Mammary epithelial cell (primary cell): ENCODE measurements at regions of chr6 and their contacts with region 1.

Region 1: DNA sequence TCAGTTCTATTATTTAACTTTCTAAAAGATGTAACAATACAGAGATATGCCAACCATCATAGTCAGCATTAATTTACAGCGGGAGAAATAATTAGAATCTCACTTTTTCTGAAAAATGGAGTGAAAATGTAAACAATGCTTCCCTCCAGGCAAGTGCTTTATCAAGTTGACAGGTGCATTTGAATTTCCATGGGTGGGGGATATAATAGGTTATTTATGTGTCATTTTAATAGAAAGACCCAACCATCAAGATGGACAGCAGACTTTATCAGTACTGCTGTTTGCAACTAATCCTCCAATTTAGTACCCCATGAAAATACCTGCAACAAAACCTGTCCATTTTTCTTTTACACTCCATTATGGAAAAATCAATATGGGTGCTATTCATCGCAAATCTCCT is 780.1 kb downstream of the TFAP2A start:
- DNase-seq: no peak
- H3K4me3 ChIP-seq: no peak overlapping the region
- H3K27ac ChIP-seq: no peak overlapping the region
- H3K4me1 ChIP-seq: no peaks in the 10 kb centered on the region
- H3K27me3 ChIP-seq: no peaks in the 10 kb centered on the region
- CTCF ChIP-seq: no peak

Region 2: DNA sequence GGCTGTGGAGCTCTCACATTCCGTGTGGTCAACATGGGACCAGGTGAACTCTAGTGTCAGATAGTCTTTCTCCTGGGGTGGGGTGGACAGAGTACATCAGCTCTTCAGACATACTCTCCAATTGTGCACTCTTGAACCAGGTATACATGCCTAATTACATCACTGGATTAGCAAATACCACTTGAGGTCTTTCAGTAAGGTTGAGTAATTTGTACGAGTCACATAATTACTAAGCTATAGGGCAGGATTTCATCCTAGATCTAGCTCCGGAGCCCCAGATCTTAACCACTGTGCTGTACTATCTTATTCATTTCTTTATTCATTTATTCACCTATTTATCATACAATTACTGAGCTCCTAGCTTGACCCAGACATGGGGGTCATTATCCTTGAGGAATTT is 41.2 kb before region 1 on chr6:
- CTCF ChIA-PET with region 1: no interaction called
- dilution Hi-C with region 1: loop called (anchors 5 kb)
- in situ Hi-C with region 1: no loop called
- intact Hi-C with region 1: no loop called
- DNase-seq: peak; percentile 27
- H3K4me3 ChIP-seq: no peak overlapping the region
- H3K27ac ChIP-seq: no peak overlapping the region
- H3K4me1 ChIP-seq: no peaks in the 10 kb centered on the region
- H3K27me3 ChIP-seq: no peaks in the 10 kb centered on the region
- CTCF ChIP-seq: no peak